ENCODE measurements at regions of chr19 and their contacts with region 1.

Region 1: DNA sequence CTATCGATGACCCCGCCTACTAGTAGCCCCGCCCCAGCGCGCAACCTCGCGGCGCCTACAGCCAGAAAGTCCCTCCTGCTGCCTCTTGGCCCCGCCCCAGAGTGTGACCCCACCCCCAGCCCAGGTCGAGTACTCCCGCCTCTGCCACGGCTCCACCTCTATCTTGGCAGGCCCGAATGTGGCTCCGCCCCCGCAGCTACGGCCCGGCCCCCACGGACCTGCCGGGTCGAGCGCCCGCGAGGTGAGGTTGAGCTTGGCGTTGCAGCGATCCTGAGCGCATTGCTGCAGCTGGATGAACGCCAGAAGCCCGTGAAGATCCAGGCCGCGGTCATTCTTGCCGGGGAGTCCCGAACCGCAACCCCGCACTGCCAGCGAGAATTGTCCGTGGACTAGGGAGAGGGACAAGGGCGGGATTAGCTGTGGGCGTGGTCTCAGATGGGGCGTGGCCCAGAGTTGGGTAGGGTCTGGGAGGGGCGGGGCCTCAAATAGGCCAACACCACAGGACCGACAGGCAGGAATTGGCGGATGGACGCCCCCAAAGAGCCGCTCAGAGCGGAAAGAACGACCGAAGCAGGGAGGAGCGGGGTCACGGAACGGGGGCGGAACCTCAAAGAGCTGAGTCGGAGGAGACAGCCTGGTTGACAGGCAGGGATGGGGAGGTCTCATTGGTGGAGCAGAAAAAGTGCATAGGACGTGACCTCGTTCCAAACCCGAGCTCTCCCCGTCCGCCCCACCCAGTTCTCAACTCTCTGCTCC is 1.8 kb downstream of the LYPD3 start:
- DNase-seq: peak; percentile 74 to 99
- H3K4me3 ChIP-seq: peak overlapping the region; percentile 50 to 93 (median 85)
- H3K27ac ChIP-seq: no peak overlapping the region
- H3K4me1 ChIP-seq: peaks cover 0 to 8% (median 3%) of the 10 kb centered on the region in 4 experiments; a peak in 4 of 7 replicates
- H3K27me3 ChIP-seq: peaks cover 0 to 25% (median 15%) of the 10 kb centered on the region in 4 experiments; a peak in 6 of 7 replicates
- CTCF ChIP-seq: no peak
- EP300 ChIP-seq: no peak
- POLR2A ChIP-seq: no peak; a peak in 1 of 3 replicates
- RAD21 ChIP-seq: no peak

Region 2: GRCh38 chr19:43474986-43475705 is 11.6 kb after region 1 on chr19:
- CTCF ChIA-PET with region 1: interaction called, 4 read pairs
- POLR2A ChIA-PET with region 1: interaction called, 23 read pairs
- DNase-seq: peak; percentile 84 to 100
- H3K4me3 ChIP-seq: peak overlapping the region; percentile 30 to 55 (median 40); a peak in 7 of 8 replicates
- H3K27ac ChIP-seq: no peak overlapping the region
- H3K4me1 ChIP-seq: peaks cover 0 to 2% (median 0%) of the 10 kb centered on the region in 4 experiments; a peak in 3 of 7 replicates
- H3K27me3 ChIP-seq: no peaks in the 10 kb centered on the region; a peak in 3 of 7 replicates
- CTCF ChIP-seq: no peak
- EP300 ChIP-seq: no peak
- POLR2A ChIP-seq: peak in 1 of 2 experiments; percentile 60; a peak in 2 of 3 replicates
- RAD21 ChIP-seq: no peak